Activated CD8-positive, alpha-beta T cell treated with anti-CD3 and anti-CD28 coated beads, Interleukin-2, amount 10 ng/mL, durations not matched to agents 7 days and 5 days (primary cell): ENCODE measurements at regions of chr15 and their contacts with region 1.

Region 1: GRCh38 chr15:85412956-85413854 is 32.8 kb downstream of the AKAP13 start:
- DNase-seq: peak; percentile 87
- ATAC-seq: peak; percentile 99
- H3K4me3 Mint-ChIP-seq: peak overlapping the region; percentile 32
- H3K27ac Mint-ChIP-seq: peak overlapping the region; percentile 68
- H3K4me1 Mint-ChIP-seq: peaks cover 62% of the 10 kb centered on the region
- H3K27me3 Mint-ChIP-seq: no peaks in the 10 kb centered on the region

Region 2: GRCh38 chr15:85312486-85312885 is 100.7 kb before region 1 on chr15:
- CTCF ChIA-PET with region 1: interaction called, 69 read pairs
- POLR2A ChIA-PET with region 1: no interaction called
- DNase-seq: no peak
- ATAC-seq: no peak
- H3K4me3 Mint-ChIP-seq: no peak overlapping the region
- H3K27ac Mint-ChIP-seq: peak overlapping the region; percentile 14
- H3K4me1 Mint-ChIP-seq: peaks cover 44% of the 10 kb centered on the region
- H3K27me3 Mint-ChIP-seq: no peaks in the 10 kb centered on the region

Region 3: DNA sequence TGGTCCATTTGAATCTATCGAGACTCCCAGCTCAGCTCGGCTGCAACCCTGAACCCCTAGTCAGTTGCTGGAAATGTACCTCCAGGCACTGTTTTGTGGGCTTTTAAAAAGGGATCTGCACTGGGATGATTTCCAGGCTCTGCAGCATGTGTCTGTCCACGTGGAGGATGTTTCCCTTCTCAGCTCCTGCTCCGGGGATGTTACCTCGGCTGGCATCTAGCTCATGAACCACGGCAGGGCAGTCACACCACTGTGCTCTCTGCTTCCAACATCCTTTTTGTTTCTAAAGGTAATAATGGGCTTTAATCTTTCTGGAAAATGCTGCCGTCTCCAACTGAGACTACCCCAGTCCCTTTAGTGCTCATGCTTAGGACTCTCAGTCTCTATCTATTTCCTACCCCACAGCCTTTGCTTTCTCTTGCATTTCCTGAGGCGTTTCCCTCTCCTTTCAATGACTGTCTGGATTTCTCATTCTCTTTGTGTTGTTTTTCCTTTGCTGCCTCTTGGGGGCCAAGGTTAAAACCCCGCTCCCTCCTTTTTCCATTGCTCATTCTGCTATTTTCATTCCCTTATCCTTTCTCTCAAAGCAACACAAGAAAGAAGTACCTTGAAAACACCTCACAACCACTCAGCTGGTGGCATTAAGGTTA is 75.7 kb before region 1 on chr15:
- CTCF ChIA-PET with region 1: interaction called, 111 read pairs
- POLR2A ChIA-PET with region 1: interaction called, 4 read pairs
- DNase-seq: no peak
- ATAC-seq: no peak
- H3K4me3 Mint-ChIP-seq: no peak overlapping the region
- H3K27ac Mint-ChIP-seq: no peak overlapping the region
- H3K4me1 Mint-ChIP-seq: peaks cover 2% of the 10 kb centered on the region
- H3K27me3 Mint-ChIP-seq: no peaks in the 10 kb centered on the region

Region 4: DNA sequence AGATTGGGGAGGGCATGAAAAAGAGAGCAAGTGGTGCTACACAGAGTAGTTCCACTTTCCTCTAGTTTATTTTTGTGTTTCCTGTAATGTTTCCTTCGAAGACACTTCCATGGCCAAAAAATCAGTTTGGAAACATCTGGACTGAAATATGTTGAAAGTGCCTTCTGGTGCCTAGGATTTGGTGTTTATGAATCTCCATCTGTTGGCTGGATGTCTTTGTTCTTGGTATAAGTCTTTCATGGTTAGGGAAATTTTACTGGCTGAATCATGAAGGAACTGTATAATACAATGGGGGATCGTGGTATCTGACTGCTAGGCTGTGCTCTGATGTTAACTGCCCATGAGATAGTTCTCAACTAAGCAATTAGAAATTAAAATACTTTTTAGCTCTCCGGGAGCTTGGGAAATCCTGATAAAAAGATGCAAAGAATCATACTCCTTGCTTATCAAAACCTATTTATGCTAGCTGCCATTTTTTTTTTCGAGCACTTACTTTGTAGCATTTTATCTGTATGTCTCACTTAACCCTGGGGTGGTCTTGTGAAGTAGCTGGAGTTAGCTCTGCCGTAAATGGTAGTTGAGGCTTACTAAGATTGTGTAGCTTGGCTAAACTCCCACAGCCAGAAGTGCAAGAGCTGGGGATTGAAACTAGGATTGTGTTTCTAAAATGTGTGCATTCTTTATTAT is 10.9 kb before region 1 on chr15:
- CTCF ChIA-PET with region 1: interaction called, 61 read pairs
- POLR2A ChIA-PET with region 1: interaction called, 5 read pairs
- DNase-seq: no peak
- ATAC-seq: no peak
- H3K4me3 Mint-ChIP-seq: no peak overlapping the region
- H3K27ac Mint-ChIP-seq: no peak overlapping the region
- H3K4me1 Mint-ChIP-seq: peaks cover 50% of the 10 kb centered on the region
- H3K27me3 Mint-ChIP-seq: no peaks in the 10 kb centered on the region

Region 5: GRCh38 chr15:85451099-85451700 is 38.0 kb after region 1 on chr15:
- CTCF ChIA-PET with region 1: no interaction called
- POLR2A ChIA-PET with region 1: no interaction called
- DNase-seq: no peak
- ATAC-seq: no peak
- H3K4me3 Mint-ChIP-seq: no peak overlapping the region
- H3K27ac Mint-ChIP-seq: no peak overlapping the region
- H3K4me1 Mint-ChIP-seq: no peaks in the 10 kb centered on the region
- H3K27me3 Mint-ChIP-seq: peaks cover 3% of the 10 kb centered on the region

Region 6: GRCh38 chr15:85485956-85486567 is 72.9 kb after region 1 on chr15:
- CTCF ChIA-PET with region 1: interaction called, 10 read pairs
- POLR2A ChIA-PET with region 1: no interaction called
- DNase-seq: peak; percentile 79
- ATAC-seq: peak; percentile 83
- H3K4me3 Mint-ChIP-seq: no peak overlapping the region
- H3K27ac Mint-ChIP-seq: no peak overlapping the region
- H3K4me1 Mint-ChIP-seq: peaks cover 46% of the 10 kb centered on the region
- H3K27me3 Mint-ChIP-seq: no peaks in the 10 kb centered on the region

Region 7: DNA sequence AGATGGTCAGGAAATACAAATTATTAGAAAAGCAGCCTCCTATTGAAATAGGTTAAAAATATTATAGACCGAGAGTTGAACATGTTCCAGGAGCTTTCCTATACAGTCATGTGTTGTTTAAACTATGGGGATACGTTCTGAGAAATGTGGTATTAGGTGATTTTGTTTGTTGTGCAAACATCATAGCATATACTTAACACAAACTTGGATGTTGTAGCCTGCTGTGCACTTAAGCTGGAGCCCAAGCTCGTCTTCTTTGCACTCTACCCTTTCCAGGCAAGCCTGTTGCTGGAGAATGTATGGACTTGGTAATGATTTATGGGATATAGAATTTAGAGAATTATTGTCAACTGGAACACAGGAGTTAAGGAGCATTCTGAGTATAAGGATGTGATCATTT is 107.4 kb after region 1 on chr15:
- CTCF ChIA-PET with region 1: no interaction called
- POLR2A ChIA-PET with region 1: no interaction called
- DNase-seq: no peak
- ATAC-seq: no peak
- H3K4me3 Mint-ChIP-seq: no peak overlapping the region
- H3K27ac Mint-ChIP-seq: no peak overlapping the region
- H3K4me1 Mint-ChIP-seq: peaks cover 14% of the 10 kb centered on the region
- H3K27me3 Mint-ChIP-seq: no peaks in the 10 kb centered on the region

Region 8: GRCh38 chr15:85646538-85647091 is 233.4 kb after region 1 on chr15:
- CTCF ChIA-PET with region 1: no interaction called
- POLR2A ChIA-PET with region 1: no interaction called
- DNase-seq: peak; percentile 61
- ATAC-seq: peak; percentile 81
- H3K4me3 Mint-ChIP-seq: peak overlapping the region; percentile 34
- H3K27ac Mint-ChIP-seq: peak overlapping the region; percentile 64
- H3K4me1 Mint-ChIP-seq: peaks cover 41% of the 10 kb centered on the region
- H3K27me3 Mint-ChIP-seq: no peaks in the 10 kb centered on the region